ENCODE measurements at regions of chr15 and their contacts with region 1.

Region 1: DNA sequence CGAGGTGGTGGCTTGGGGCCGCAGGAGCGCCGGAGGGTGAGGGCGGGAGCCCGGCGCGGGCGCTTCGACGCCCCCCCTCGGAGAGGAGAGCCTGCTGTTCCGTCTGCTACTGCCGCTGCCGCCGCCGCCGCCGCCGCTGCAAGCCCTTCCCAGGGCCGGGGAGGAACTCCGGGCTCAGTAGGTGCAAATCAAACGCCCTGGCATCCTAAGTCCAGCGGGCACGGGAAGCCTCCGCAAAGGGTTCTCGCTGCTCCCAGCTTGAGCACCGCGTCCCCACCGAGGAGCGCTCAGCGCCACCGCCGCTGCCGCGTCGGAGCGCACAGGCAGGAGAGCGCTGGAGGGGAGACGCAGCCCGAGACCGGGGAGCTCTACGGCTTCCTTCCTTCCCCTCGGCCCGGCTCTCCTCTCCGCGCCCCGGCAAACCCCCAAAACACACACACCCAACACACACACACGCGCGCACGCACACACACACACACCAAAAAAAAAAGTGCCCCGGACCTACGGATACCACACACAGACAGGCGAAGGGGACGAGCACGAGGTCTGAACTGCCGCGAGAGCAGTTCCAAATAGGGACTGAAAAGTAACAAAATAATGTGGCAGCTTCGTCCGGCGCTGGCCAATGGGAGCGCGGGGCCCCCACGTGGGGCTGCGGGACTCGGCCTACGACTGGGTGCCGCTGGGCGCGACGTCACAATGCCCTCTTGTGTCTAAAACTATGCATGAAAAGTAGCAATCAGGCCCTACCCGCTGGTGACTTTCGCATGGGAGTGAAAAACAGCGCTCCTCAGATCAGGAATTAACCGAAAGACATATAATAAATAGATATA is at the start of gene TLE3:
- DNase-seq: peak; percentile 99
- ATAC-seq: peak; percentile 68
- H3K4me3 Mint-ChIP-seq: peak within 1 kb of the TSS; percentile 93
- H3K27ac Mint-ChIP-seq: peak within 1 kb of the TSS; percentile 95
- H3K4me1 Mint-ChIP-seq: peaks cover 41% of the 10 kb centered on the region
- H3K27me3 Mint-ChIP-seq: peaks cover 5% of the 10 kb centered on the region
- total RNA-seq, gene TLE3: 89.2 to 97.6 TPM

Region 2: GRCh38 chr15:68277603-68278344 is 1819.8 kb before region 1 on chr15 and contains the start of gene FEM1B:
- CTCF ChIA-PET with region 1: no interaction called
- POLR2A ChIA-PET with region 1: no interaction called
- intact Hi-C with region 1: loop called in 1 of 2 experiments (anchors 5 kb)
- DNase-seq: peak; percentile 94
- ATAC-seq: peak; percentile 79
- H3K4me3 Mint-ChIP-seq: peak within 1 kb of the TSS; percentile 99
- H3K27ac Mint-ChIP-seq: peak within 1 kb of the TSS; percentile 99
- H3K4me1 Mint-ChIP-seq: peaks cover 43% of the 10 kb centered on the region
- H3K27me3 Mint-ChIP-seq: no peaks in the 10 kb centered on the region
- total RNA-seq, gene FEM1B: 41.1 to 50.0 TPM

Region 3: DNA sequence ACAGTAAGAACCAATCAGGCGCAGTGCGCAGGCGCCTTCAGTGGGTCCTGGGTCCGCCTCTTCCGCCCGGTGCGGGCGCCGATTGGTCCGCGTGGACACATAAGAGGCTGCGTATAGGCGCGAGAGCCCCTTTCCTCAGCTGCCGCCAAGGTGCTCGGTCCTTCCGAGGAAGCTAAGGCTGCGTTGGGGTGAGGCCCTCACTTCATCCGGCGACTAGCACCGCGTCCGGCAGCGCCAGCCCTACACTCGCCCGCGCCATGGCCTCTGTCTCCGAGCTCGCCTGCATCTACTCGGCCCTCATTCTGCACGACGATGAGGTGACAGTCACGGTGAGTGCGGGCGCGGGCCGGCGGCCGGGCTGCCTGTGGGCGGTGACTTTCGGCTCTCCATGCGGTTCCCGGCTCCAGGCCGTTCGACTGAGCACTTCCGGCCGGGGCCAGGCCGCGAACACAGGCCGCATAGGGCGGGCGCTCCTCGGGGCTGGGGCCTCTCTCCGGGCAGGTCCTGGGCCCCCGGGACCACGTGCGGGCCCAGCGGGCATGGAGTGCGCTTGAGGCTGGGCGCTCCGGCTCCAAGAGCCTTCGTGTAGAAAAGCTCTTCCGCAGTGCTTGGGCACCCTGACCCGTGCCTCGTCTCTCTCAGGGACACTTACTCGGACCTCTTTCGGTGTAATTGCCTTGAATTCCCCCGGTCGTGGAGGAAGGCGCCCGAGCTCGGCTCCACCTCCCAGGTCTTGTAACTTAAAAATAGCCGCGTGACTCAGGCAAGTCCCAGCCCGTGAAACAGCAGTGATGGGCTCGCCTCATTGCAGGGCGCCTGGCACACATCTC is 644.6 kb before region 1 on chr15 and contains the start of gene RPLP1:
- CTCF ChIA-PET with region 1: no interaction called
- POLR2A ChIA-PET with region 1: no interaction called
- intact Hi-C with region 1: loop called in 1 of 2 experiments (anchors 2 kb)
- DNase-seq: peak; percentile 97
- ATAC-seq: peak; percentile 94
- H3K4me3 Mint-ChIP-seq: peak within 1 kb of the TSS; percentile 91
- H3K27ac Mint-ChIP-seq: peak within 1 kb of the TSS; percentile 99
- H3K4me1 Mint-ChIP-seq: peaks cover 24% of the 10 kb centered on the region
- H3K27me3 Mint-ChIP-seq: no peaks in the 10 kb centered on the region
- total RNA-seq, gene RPLP1: 1,576 to 2,330 TPM

Region 4: DNA sequence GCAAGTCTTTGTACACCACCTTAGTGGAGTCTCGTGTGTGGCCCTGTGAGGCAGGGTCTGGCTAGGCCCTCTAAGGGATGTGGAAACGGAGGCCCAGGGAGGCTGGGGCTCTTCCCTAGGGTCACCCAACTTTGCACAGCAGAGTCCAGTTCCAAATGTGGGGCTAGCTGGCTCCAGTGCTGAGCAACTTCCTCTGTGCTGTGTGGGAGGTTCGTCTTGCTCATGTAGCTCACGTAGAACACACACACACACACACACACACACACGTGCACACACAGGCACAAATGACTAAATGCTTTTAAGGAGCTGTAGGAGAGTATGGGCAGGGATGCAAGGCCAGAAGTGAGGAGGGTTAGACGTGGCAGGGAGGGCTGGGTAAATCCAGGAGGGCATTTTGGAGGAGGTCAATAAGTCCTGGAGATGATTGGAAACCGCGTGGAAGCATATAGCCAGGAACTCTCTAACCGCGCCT is 431.1 kb before region 1 on chr15:
- CTCF ChIA-PET with region 1: no interaction called
- POLR2A ChIA-PET with region 1: no interaction called
- intact Hi-C with region 1: no loop called
- DNase-seq: peak; percentile 80
- ATAC-seq: peak; percentile 69
- H3K4me3 Mint-ChIP-seq: no peak overlapping the region
- H3K27ac Mint-ChIP-seq: peak overlapping the region; percentile 80
- H3K4me1 Mint-ChIP-seq: peaks cover 29% of the 10 kb centered on the region
- H3K27me3 Mint-ChIP-seq: no peaks in the 10 kb centered on the region

Region 5: DNA sequence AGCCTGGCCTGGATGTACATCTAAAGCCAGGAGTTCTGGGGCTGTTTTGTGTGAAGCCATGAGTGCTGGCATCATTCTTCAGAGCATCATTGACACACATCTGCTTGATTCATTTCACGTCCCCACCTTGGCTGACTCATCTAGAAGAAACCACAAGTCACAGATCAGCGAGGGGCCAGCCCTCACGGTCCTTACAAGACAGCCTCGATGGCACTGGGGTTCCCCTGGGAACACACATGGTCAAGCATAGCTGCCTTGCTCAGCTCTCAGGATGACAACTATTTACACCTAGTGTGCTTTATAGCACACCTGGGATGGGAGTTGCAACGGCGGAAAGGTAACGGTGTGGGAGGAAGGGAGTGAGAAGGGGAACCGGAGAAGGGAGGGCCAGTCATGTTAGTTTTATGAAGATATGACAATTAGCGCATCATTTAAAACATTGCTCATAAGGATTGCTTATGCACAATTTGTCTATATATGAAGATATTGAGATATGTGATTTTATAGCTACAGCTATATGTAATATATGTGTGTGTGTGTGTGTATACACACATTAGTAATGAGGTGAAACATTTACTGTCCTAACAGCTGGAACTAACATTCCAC is 417.8 kb before region 1 on chr15:
- CTCF ChIA-PET with region 1: no interaction called
- POLR2A ChIA-PET with region 1: no interaction called
- intact Hi-C with region 1: loop called in 1 of 2 experiments (anchors 1 kb)
- DNase-seq: peak; percentile 81
- ATAC-seq: peak; percentile 95
- H3K4me3 Mint-ChIP-seq: no peak overlapping the region
- H3K27ac Mint-ChIP-seq: peak overlapping the region; percentile 73
- H3K4me1 Mint-ChIP-seq: peaks cover 26% of the 10 kb centered on the region
- H3K27me3 Mint-ChIP-seq: peaks cover 10% of the 10 kb centered on the region

Region 6: DNA sequence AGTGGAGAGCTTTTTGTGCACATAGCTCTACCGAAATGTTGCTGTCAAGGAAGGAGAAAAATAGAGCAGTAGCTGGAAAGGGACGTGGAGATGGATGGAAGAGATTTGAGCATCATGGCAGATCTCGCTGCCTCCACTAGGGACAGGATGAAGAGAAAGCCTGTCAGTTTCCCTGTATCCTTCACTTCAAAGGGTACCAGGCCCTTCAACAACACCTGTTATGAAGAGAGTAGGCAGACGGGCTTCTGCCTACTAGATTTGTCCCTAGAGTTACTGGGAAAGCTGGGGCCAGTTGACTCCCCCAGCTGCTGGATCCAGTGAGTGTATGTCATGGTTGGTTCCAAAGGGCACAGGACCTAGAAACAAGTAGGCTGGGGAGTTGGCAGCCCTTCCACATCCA is 150.7 kb before region 1 on chr15:
- CTCF ChIA-PET with region 1: no interaction called
- POLR2A ChIA-PET with region 1: no interaction called
- intact Hi-C with region 1: no loop called
- DNase-seq: no peak
- ATAC-seq: no peak
- H3K4me3 Mint-ChIP-seq: no peak overlapping the region
- H3K27ac Mint-ChIP-seq: no peak overlapping the region
- H3K4me1 Mint-ChIP-seq: no peaks in the 10 kb centered on the region
- H3K27me3 Mint-ChIP-seq: peaks cover 2% of the 10 kb centered on the region

Region 7: GRCh38 chr15:69997697-69998273 is 99.8 kb before region 1 on chr15:
- CTCF ChIA-PET with region 1: no interaction called
- POLR2A ChIA-PET with region 1: no interaction called
- intact Hi-C with region 1: no loop called
- DNase-seq: no peak
- ATAC-seq: no peak
- H3K4me3 Mint-ChIP-seq: no peak overlapping the region
- H3K27ac Mint-ChIP-seq: no peak overlapping the region
- H3K4me1 Mint-ChIP-seq: no peaks in the 10 kb centered on the region
- H3K27me3 Mint-ChIP-seq: no peaks in the 10 kb centered on the region

Region 8: DNA sequence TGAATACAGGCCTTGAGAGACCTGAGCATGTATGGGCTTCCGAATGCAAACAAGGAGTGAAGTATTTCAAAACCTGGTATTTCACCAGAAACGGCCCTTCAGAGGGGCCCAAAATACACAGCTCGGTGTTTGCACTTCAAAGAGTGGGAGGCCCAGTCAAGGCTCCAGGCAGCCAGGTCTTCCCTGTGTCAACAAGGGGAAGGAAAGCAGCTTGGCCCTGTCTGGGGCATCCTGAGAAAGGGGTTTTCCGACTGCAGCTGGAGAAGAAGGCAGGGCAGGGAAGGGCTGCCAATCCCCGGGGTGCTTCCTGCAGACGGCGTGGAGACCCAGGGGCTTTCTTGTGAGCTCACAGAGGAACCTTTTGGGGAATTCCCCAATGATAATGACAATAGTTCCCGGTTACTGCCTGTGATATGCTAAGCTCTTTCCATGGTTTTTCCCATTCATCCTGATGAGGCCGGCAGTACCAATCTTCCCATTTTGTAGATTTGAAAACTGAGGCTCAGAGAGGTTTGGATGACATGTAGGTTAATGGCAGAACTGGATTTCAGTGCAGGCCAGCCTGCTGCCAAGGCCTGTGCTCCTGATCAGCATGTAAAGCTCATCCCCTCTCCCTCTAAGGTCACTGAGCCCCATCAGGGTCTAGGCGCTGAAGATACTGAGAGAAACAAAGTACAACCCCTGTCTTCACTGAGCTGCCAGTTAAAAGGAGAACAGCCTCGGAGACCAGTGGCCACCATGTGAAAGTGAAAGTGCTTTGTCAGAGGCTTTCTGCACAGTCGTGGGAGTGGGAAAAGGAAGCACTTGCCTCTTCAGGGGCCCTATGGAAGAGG is 43.2 kb after region 1 on chr15:
- CTCF ChIA-PET with region 1: interaction called, 9 read pairs
- POLR2A ChIA-PET with region 1: interaction called, 4 read pairs
- intact Hi-C with region 1: loop called (anchors 1 to 2 kb)
- DNase-seq: peak; percentile 55
- ATAC-seq: peak; percentile 32
- H3K4me3 Mint-ChIP-seq: peak overlapping the region; percentile 8
- H3K27ac Mint-ChIP-seq: peak overlapping the region; percentile 40
- H3K4me1 Mint-ChIP-seq: peaks cover 34% of the 10 kb centered on the region
- H3K27me3 Mint-ChIP-seq: peaks cover 21% of the 10 kb centered on the region

Region 9: DNA sequence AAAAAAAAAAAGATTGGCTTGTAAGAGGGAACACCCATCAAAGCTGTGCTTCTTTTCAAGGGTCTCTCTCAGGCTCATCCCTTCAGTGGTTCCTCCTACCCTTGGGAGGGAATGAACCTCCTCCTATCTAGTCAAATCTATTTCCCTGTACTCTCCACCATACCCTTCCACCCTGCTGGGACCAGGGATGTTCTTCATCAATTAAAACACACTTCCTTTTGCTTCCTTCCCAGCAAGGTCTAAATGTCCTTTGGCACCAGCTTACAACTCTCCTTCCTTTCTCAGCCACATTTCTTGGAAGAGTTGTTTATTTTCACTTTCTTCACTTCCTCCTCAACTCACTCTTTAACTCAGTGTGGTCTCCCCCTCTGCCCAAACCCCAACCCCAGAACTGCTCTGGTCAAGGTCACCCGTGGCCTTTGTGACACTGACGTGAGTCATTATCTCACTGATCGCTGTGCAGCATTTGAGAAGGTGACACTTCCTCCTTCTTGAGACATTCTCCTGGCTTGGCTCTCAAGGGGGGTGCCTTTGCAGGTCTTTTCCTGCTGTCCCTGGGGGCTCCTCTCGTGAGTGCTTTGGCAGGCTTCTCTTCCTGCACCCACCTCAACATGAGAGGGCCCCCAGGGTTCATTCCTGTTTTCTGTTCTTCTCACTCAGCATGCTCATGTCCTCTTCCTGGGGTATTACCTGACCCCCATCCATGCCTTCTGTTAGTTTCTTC is 210.6 kb after region 1 on chr15:
- CTCF ChIA-PET with region 1: no interaction called
- POLR2A ChIA-PET with region 1: no interaction called
- intact Hi-C with region 1: no loop called
- DNase-seq: peak; percentile 31
- ATAC-seq: peak; percentile 58
- H3K4me3 Mint-ChIP-seq: no peak overlapping the region
- H3K27ac Mint-ChIP-seq: no peak overlapping the region
- H3K4me1 Mint-ChIP-seq: peaks cover 7% of the 10 kb centered on the region
- H3K27me3 Mint-ChIP-seq: peaks cover 4% of the 10 kb centered on the region

Region 10: GRCh38 chr15:70504299-70504951 is 406.9 kb after region 1 on chr15:
- CTCF ChIA-PET with region 1: interaction called, 3 read pairs
- POLR2A ChIA-PET with region 1: no interaction called
- intact Hi-C with region 1: loop called in 1 of 2 experiments (anchors 2 kb)
- DNase-seq: peak; percentile 76
- ATAC-seq: peak; percentile 31
- H3K4me3 Mint-ChIP-seq: no peak overlapping the region
- H3K27ac Mint-ChIP-seq: peak overlapping the region; percentile 79
- H3K4me1 Mint-ChIP-seq: peaks cover 77% of the 10 kb centered on the region
- H3K27me3 Mint-ChIP-seq: peaks cover 2% of the 10 kb centered on the region